Activated CD4-positive, alpha-beta memory T cell treated with anti-CD3 and anti-CD28 coated beads for 36 hours (primary cell): ENCODE measurements at regions of chr3 and their contacts with region 1.

Region 1: GRCh38 chr3:73029321-73029796 is 32.1 kb upstream of the EBLN2 start:
- DNase-seq: no peak
- H3K4me3 Mint-ChIP-seq: peak overlapping the region; percentile 0
- H3K27ac Mint-ChIP-seq: peak overlapping the region; percentile 33
- H3K4me1 Mint-ChIP-seq: peaks cover 90% of the 10 kb centered on the region
- H3K27me3 Mint-ChIP-seq: no peaks in the 10 kb centered on the region

Region 2: DNA sequence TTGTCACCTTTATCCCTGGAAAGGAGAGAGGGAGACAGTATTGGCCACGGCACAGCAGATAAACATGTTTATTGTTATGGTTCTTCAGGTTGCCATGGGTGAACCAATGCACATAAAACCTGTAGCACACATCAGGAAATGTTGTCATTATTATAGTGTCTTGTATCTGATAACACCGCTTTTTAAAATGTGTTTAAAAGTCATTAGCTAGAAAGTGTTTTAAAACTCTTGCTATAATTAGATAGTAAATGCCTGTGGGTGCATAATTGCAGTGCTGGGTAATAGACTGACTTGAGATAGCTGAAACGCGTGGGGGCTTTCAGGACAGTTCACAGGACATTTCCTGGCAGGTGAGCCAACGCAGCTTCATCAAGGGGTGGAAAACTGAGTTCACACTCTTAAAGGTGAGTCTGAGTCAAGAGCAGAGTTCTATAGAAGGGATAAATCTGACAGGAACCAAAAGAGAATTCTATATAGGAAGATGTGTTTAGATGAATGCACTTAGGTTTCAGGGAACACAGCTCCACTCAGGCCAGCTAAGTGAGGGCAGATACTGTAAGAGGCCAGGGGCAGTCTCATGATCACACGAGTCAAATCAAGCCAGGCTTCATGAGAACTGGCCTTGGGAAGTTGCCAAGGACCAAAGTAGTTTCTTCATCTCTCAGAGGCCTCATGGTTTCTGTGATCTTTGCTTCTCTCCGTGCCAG is 68.4 kb before region 1 on chr3:
- CTCF ChIA-PET with region 1: no interaction called
- POLR2A ChIA-PET with region 1: no interaction called
- intact Hi-C with region 1: loop called (anchors 2 kb)
- DNase-seq: peak; percentile 55
- H3K4me3 Mint-ChIP-seq: no peak overlapping the region
- H3K27ac Mint-ChIP-seq: peak overlapping the region; percentile 35
- H3K4me1 Mint-ChIP-seq: peaks cover 41% of the 10 kb centered on the region
- H3K27me3 Mint-ChIP-seq: no peaks in the 10 kb centered on the region

Region 3: GRCh38 chr3:72991522-72991921 is 37.8 kb before region 1 on chr3:
- CTCF ChIA-PET with region 1: no interaction called
- POLR2A ChIA-PET with region 1: no interaction called
- intact Hi-C with region 1: no loop called
- DNase-seq: no peak
- H3K4me3 Mint-ChIP-seq: no peak overlapping the region
- H3K27ac Mint-ChIP-seq: no peak overlapping the region
- H3K4me1 Mint-ChIP-seq: peaks cover 10% of the 10 kb centered on the region
- H3K27me3 Mint-ChIP-seq: no peaks in the 10 kb centered on the region

Region 4: GRCh38 chr3:73045391-73045790 is 16.0 kb after region 1 on chr3:
- CTCF ChIA-PET with region 1: no interaction called
- POLR2A ChIA-PET with region 1: no interaction called
- intact Hi-C with region 1: loop called (anchors 2 kb)
- DNase-seq: no peak
- H3K4me3 Mint-ChIP-seq: no peak overlapping the region
- H3K27ac Mint-ChIP-seq: no peak overlapping the region
- H3K4me1 Mint-ChIP-seq: peaks cover 57% of the 10 kb centered on the region
- H3K27me3 Mint-ChIP-seq: no peaks in the 10 kb centered on the region